OCI-LY7 (cell line): ENCODE measurements at regions of chr12 and their contacts with region 1.

Region 1: DNA sequence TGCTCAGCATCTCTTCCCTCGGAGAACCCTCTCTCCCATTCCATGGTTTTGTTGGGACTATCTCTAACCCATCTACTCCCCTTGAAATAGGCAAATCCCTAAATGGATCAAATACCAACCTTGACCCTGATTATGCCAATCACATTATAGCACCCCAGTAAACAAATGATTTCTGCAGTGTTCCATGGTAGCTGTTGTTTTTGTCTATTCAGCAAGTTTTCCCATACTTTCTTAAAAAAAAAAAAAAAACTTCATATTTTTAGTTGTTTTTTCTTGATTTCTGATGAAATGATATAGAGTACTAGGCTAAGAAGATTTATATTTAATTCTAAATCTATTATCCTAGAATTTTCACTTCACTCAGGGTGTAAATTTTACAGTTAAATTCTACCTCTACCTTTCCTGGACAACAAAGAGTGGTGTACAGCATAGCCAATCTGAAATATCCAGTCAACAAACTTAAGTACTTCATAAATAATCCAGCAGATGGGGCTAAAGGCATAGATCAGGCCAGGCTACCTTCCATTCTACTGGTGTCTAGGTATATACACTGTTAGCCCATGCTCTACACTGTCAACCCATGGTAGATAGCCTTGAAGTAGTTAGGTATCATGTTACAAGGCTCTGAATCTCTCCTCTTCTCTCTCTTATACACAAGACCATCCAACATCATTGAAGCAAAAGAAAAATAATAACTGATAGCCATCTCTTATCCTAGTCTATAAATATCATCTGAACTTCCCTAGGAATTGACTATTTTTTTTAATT is 82.2 kb downstream of the PLEKHG7 start:
- DNase-seq: peak; percentile 79
- H3K4me3 ChIP-seq: no peak overlapping the region
- H3K27ac ChIP-seq: no peak overlapping the region
- H3K4me1 ChIP-seq: no peaks in the 10 kb centered on the region
- CTCF ChIP-seq: peak; percentile 84

Region 2: GRCh38 chr12:93373961-93374656 is 589.1 kb after region 1 on chr12:
- CTCF ChIA-PET with region 1: no interaction called
- POLR2A ChIA-PET with region 1: no interaction called
- intact Hi-C with region 1: no loop called
- DNase-seq: no peak
- H3K4me3 ChIP-seq: no peak overlapping the region
- H3K27ac ChIP-seq: no peak overlapping the region
- H3K4me1 ChIP-seq: peaks cover 4% of the 10 kb centered on the region
- CTCF ChIP-seq: no peak

Region 3: DNA sequence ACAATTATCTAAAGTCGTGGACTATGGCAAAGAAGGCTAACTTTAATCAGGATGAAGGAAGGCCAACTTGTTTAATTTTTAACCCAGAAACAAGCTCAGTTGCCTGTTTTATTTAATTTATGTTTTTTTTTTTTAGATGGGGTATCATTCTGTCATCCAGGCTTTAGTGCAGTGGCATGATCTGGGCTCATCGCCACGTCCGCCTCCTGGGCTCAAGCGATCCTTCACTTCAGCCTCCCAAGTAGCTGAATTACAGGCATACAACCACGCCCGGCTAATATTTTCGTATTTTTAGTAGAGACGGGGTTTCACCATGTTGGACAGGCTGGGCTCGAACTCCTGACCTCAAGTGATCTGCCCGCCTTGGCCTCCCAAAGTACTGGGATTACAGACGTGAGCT is 612.4 kb after region 1 on chr12:
- CTCF ChIA-PET with region 1: no interaction called
- POLR2A ChIA-PET with region 1: no interaction called
- intact Hi-C with region 1: loop called (anchors 5 kb)
- DNase-seq: no peak
- H3K4me3 ChIP-seq: no peak overlapping the region
- H3K27ac ChIP-seq: no peak overlapping the region
- H3K4me1 ChIP-seq: peaks cover 6% of the 10 kb centered on the region
- CTCF ChIP-seq: no peak